Esophagus muscularis mucosa (tissue), 4 donors: ENCODE measurements at regions of chr18 and their contacts with region 1.

Region 1: DNA sequence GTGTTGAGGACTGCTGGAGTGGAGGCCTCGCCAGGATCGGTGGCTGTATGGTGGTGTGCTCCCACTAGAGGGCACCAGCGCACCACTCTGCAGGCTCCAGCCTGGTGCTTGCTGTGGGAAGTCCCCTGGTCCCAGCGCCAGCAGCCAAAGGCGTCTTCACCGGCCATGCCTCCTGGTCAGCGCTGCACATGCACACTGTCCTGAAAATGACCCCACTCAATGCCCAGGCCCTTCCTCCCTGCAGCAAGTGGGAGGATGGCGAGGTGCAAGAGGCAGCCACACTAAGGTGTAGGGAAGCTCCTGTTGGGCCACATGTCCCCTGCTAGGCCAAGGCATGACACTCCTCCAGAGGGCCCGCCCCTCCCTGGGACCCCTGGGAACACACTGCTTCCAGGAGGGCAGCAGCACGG is 136.5 kb downstream of the CTIF start:
- DNase-seq: peak; percentile 95
- H3K4me3 ChIP-seq: no peak overlapping the region
- H3K27ac ChIP-seq: peak overlapping the region in 1 of 4 donors; percentile 21
- H3K4me1 ChIP-seq: peaks cover 43 to 65% (median 47%) of the 10 kb centered on the region in 4 donors
- H3K27me3 ChIP-seq: no peaks in the 10 kb centered on the region
- CTCF ChIP-seq: peak; percentile 87 to 97 (median 91)
- EP300 ChIP-seq: no peak
- POLR2A ChIP-seq: no peak

Region 2: GRCh38 chr18:48545757-48546321 is 129.5 kb before region 1 on chr18:
- intact Hi-C with region 1: no loop called
- DNase-seq: no peak
- H3K4me3 ChIP-seq: peak overlapping the region in 1 of 4 donors; percentile 1
- H3K27ac ChIP-seq: peak overlapping the region; percentile 80 to 88 (median 82)
- H3K4me1 ChIP-seq: peaks cover 84 to 96% (median 91%) of the 10 kb centered on the region in 4 donors
- H3K27me3 ChIP-seq: no peaks in the 10 kb centered on the region
- CTCF ChIP-seq: no peak
- EP300 ChIP-seq: no peak
- POLR2A ChIP-seq: no peak

Region 3: DNA sequence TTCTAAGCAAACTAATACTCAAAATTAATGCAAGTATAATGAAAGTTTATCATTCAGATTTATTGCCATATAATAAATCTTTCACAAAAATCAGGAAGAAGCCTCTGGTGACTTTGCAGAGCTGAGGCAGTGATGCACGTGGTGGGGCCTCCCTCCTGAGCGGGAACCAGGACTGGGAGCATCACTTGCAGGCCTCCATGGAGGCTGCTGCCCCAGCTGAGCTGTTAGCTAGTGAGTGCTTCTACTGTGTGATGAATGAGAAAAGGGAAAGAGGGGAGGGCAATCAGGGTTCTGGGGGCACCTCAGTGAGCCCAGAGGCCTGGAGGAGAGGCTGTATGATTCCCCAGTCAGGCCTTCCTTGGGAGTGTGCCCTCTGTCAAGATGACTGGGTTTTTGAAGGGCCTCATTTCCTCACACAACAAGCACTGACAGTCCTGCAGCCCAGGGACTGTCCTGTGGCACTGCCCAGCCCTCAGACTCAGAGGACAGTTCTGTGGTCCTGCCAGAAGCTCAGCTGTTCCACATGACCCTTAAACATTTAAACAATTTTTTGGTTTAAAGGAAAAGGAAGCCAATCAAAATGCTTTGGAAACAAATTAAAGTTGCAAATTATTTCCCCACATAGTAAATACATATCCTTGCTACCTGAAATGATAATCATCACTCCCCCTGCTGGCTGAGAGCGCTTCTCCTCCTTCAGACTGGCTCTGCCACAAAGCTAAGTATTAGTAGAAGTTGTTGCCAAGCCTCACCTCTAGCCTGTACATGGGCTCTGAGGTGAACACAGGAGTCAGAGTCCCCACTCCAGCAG is 366.3 kb after region 1 on chr18:
- intact Hi-C with region 1: loop called (anchors 5 kb)
- DNase-seq: no peak
- H3K4me3 ChIP-seq: no peak overlapping the region
- H3K27ac ChIP-seq: peak overlapping the region in 3 of 4 donors; percentile 29 to 45 (median 43)
- H3K4me1 ChIP-seq: peaks cover 0 to 10% (median 7%) of the 10 kb centered on the region in 4 donors
- H3K27me3 ChIP-seq: no peaks in the 10 kb centered on the region
- CTCF ChIP-seq: peak; percentile 58 to 80 (median 65)
- EP300 ChIP-seq: no peak
- POLR2A ChIP-seq: no peak

Region 4: GRCh38 chr18:49189772-49190171 is 514.4 kb after region 1 on chr18:
- intact Hi-C with region 1: loop called (anchors 10 kb)
- DNase-seq: no peak
- H3K4me3 ChIP-seq: no peak overlapping the region
- H3K27ac ChIP-seq: no peak overlapping the region
- H3K4me1 ChIP-seq: peaks cover 0 to 23% (median 16%) of the 10 kb centered on the region in 4 donors
- H3K27me3 ChIP-seq: no peaks in the 10 kb centered on the region
- CTCF ChIP-seq: no peak
- EP300 ChIP-seq: no peak
- POLR2A ChIP-seq: no peak

Region 5: DNA sequence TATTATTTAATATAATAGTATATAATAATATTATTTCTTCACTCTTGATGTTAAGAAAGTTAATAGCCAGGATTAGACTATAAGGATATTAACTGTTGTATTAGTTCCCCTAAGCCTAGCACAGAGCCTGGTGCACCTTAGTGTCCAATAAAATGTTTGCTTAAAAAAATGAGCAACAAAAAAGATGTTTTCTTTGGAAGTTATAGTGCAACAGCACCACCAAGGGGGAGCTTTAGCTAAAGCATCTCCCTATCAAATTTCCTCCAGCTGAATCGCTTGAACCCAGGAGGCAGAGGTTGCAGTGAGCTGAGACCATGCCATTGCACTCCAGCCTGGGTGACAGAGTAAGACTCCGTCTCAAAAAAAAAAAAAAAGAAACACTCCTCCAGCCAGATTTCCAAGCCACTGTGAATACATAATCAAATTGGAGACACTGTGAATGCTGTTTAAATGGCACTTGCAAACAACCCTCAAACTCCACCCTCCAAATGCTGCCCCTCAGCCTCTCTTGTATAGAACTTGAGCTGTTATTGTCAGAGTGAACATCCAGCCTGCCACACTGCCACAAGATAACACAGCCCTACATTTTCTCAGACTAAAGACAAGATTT is 563.2 kb after region 1 on chr18:
- intact Hi-C with region 1: loop called (anchors 10 kb)
- DNase-seq: no peak
- H3K4me3 ChIP-seq: no peak overlapping the region
- H3K27ac ChIP-seq: no peak overlapping the region
- H3K4me1 ChIP-seq: no peaks in the 10 kb centered on the region
- H3K27me3 ChIP-seq: no peaks in the 10 kb centered on the region
- CTCF ChIP-seq: peak; percentile 25 to 52 (median 34)
- EP300 ChIP-seq: no peak
- POLR2A ChIP-seq: no peak

Region 6: DNA sequence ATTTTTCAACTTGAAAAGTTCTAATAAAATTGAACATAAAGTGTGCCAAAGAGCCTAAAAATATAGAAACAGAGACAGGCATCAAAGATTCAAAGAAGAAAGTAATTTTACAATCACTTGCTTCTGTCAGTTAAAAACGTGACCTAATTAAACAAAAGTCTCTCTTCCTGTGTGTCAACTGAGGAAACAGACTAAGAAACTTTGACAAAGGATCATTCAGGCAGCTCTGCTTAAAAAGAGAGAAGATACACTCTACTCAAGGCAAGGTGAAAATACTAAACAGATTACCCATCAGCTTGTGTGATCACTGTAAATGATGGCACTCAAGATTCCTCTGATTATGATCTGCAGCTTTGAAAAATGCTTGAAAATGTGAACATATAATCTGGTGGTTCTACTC is 737.3 kb after region 1 on chr18:
- intact Hi-C with region 1: loop called (anchors 10 kb)
- DNase-seq: no peak
- H3K4me3 ChIP-seq: no peak overlapping the region
- H3K27ac ChIP-seq: peak overlapping the region in 1 of 4 donors; percentile 12
- H3K4me1 ChIP-seq: peaks cover 8 to 40% (median 27%) of the 10 kb centered on the region in 4 donors
- H3K27me3 ChIP-seq: no peaks in the 10 kb centered on the region
- CTCF ChIP-seq: no peak
- EP300 ChIP-seq: no peak
- POLR2A ChIP-seq: no peak